ENCODE measurements at regions of chr2 and their contacts with region 1.

Region 1: GRCh38 chr2:105712981-105713596 is 31.6 kb upstream of the NCK2 start:
- DNase-seq: peak; percentile 75
- H3K4me3 ChIP-seq: peak overlapping the region in 1 of 3 experiments; percentile 31
- H3K27ac ChIP-seq: peak overlapping the region; percentile 56
- H3K4me1 ChIP-seq: peaks cover 25% of the 10 kb centered on the region
- H3K27me3 ChIP-seq: no peaks in the 10 kb centered on the region
- CTCF ChIP-seq: no peak

Region 2: DNA sequence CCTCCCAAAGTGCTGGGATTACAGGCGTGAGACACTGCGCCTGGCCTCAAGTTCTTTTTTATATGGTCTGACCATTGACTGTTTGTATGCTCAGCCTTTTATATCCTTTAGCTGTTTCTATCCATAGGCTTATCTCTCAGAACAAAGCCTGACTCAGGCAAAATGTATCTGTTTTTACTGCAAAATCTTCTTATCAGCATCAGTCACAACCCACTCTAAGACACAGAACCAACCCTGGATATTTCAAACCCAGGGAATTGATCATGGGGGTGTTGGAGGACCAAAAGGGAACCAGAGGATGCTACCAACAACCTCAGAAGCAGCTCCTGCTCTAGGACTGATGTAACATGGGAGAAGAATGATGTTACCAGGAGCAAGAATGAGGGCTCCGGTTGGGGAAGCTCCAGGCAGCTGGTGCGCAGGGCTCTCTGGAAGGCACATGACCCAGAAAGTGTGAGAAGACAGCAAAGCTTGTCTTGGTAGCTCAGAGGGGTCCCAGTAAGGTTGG is 43.7 kb before region 1 on chr2:
- CTCF ChIA-PET with region 1: no interaction called
- dilution Hi-C with region 1: no loop called
- in situ Hi-C with region 1: no loop called
- intact Hi-C with region 1: loop called (anchors 5 kb)
- DNase-seq: no peak
- H3K4me3 ChIP-seq: no peak overlapping the region
- H3K27ac ChIP-seq: no peak overlapping the region
- H3K4me1 ChIP-seq: no peaks in the 10 kb centered on the region
- H3K27me3 ChIP-seq: no peaks in the 10 kb centered on the region
- CTCF ChIP-seq: no peak

Measured in mammary epithelial cell (primary cell).